CD8-positive, alpha-beta T cell (primary cell): ENCODE measurements at regions of chr1 and their contacts with region 1.

Region 1: DNA sequence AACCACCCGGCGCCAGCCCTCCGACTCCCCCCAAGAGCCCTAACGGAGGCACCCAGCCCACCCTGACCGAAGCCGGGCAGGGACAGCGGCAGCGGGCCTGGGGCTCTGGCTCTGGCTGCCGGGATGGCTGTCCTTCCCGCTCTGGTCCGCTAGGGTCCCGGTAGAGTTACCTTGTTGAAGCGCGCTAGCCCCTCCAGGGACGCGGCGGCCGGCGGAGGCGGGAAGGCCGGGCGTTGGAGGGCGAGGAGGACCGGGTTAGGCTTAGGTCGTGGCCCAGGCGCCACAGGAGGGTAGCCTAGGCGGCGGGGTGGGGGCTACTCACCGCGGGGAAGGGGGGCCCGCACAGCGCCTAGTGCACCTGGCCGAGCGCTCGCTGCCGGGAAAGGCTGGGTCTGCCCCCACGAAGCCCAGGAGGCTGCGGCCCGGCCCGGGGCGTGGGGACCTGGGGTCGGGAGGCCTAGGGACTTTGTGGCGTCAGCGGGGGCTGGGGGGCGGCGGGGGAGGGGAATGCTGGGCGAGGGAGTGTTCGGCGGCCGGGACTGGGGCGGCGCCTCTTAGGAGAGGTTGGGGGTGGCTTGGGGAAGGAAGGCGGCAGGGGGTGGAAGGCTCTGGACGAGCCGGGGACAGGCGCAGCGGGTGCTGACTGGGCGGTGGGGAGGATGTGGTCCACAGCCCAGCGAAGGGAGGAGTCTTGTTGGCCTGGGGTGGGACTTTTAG is at the start of gene TRIM17:
- DNase-seq: peak in 7 of 9 experiments; percentile 24 to 68 (median 54)
- ATAC-seq: peak; percentile 76
- H3K4me3 ChIP-seq: peak within 1 kb of the TSS; percentile 52 to 57
- H3K4me3 Mint-ChIP-seq: peak within 1 kb of the TSS; percentile 83
- H3K27ac ChIP-seq: no peak within 1 kb of the TSS
- H3K27ac Mint-ChIP-seq: peak within 1 kb of the TSS; percentile 25
- H3K4me1 ChIP-seq: peaks cover 16% of the 10 kb centered on the region
- H3K4me1 Mint-ChIP-seq: peaks cover 21% of the 10 kb centered on the region
- H3K27me3 ChIP-seq: peaks cover 0 to 4% of the 10 kb centered on the region in 2 experiments
- H3K27me3 Mint-ChIP-seq: no peaks in the 10 kb centered on the region
- CTCF ChIP-seq: no peak
- total RNA-seq, gene TRIM17: 1.1 to 1.4 TPM

Region 2: GRCh38 chr1:228486596-228487335 is 70.4 kb after region 1 on chr1:
- CTCF ChIA-PET with region 1: no interaction called
- POLR2A ChIA-PET with region 1: no interaction called
- intact Hi-C with region 1: loop called in 1 of 2 experiments (anchors 2 kb)
- DNase-seq: peak; percentile 66 to 94 (median 77)
- ATAC-seq: peak; percentile 75
- H3K4me3 ChIP-seq: peak overlapping the region; percentile 88 to 90
- H3K4me3 Mint-ChIP-seq: peak overlapping the region; percentile 98
- H3K27ac ChIP-seq: peak overlapping the region; percentile 100
- H3K27ac Mint-ChIP-seq: peak overlapping the region; percentile 100
- H3K4me1 ChIP-seq: peaks cover 31% of the 10 kb centered on the region
- H3K4me1 Mint-ChIP-seq: peaks cover 37% of the 10 kb centered on the region
- H3K27me3 ChIP-seq: no peaks in the 10 kb centered on the region
- H3K27me3 Mint-ChIP-seq: no peaks in the 10 kb centered on the region
- CTCF ChIP-seq: no peak

Region 3: DNA sequence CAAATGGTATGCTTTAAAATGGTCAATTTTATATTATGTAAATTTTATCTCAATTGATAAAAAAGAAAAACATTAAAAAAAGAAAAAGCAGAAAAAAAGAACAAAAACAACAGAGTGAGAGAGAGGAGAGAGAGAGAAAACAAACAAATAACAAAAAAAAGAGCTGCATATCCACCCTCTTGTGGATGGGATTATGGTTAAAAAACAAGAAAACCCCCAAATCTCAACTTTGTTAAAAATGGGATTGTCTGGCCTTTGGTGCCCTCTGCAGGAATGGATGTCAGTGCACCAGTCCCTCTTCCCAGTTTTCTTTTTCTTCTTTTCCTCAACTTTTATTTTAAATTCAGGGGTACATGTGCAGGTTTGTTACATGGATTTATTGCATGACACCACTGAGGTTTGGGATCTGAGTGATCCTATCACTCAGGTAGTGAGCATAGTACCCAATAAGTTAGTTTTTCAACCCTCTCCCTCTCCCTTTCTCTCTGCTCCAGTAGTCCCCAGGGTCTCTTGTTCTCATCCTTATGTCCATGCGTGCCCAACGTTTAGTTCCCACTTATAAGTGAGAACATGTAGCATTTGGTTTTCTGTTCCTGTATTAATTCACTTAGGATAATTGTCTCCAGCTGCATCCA is 98.9 kb after region 1 on chr1:
- CTCF ChIA-PET with region 1: no interaction called
- POLR2A ChIA-PET with region 1: no interaction called
- intact Hi-C with region 1: no loop called
- DNase-seq: peak in 7 of 9 experiments; percentile 7 to 76 (median 33)
- ATAC-seq: peak; percentile 52
- H3K4me3 ChIP-seq: no peak overlapping the region
- H3K4me3 Mint-ChIP-seq: no peak overlapping the region
- H3K27ac ChIP-seq: no peak overlapping the region
- H3K27ac Mint-ChIP-seq: no peak overlapping the region
- H3K4me1 ChIP-seq: peaks cover 11% of the 10 kb centered on the region
- H3K4me1 Mint-ChIP-seq: peaks cover 15% of the 10 kb centered on the region
- H3K27me3 ChIP-seq: no peaks in the 10 kb centered on the region
- H3K27me3 Mint-ChIP-seq: peaks cover 10% of the 10 kb centered on the region
- CTCF ChIP-seq: peak; percentile 93